Dorsolateral prefrontal cortex (tissue), 120 donors: ENCODE measurements at regions of chr2 and their contacts with region 1.

Region 1: DNA sequence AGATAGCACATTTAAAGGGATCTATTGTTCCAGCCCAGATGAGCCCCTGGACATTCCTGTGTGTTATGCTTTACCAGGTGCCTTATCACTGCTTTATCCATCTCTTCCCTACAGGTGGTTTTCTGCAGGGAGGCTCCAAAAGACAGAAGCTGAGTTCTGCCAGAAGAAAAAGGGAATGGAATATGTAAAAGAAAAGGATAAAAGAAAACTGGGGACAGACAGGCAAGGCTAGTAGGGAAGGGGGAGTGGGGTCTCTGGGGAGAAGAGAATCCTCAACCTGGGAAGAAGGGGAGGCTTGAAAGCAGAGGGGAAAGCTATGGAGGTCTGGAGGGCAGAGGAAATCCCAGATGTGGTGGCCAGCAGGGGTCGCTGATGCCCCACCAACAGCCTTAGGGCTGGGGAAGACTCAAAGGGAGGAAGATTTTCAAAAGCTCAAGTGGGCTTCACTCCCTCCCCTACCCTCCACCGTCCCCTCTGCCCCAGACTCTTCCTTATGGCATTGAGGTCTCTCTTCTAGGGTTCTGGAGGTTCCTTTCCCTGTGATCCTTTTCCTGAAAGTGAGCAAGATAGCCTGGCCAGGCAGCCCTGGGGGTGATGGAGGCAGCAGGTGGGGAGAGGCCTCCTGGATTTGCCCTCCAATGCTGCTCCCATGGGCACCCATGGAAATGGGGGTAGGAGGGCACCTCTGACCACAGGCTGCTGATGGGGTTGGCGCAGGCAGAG is 178.1 kb upstream of the PKDCC start:
- DNase-seq: peak; percentile 44 to 86 (median 78)
- H3K4me3 ChIP-seq: no peak overlapping the region
- H3K27ac ChIP-seq: no peak overlapping the region
- H3K27me3 ChIP-seq: no peaks in the 10 kb centered on the region
- CTCF ChIP-seq: peak; percentile 78 to 99 (median 92)

Region 2: DNA sequence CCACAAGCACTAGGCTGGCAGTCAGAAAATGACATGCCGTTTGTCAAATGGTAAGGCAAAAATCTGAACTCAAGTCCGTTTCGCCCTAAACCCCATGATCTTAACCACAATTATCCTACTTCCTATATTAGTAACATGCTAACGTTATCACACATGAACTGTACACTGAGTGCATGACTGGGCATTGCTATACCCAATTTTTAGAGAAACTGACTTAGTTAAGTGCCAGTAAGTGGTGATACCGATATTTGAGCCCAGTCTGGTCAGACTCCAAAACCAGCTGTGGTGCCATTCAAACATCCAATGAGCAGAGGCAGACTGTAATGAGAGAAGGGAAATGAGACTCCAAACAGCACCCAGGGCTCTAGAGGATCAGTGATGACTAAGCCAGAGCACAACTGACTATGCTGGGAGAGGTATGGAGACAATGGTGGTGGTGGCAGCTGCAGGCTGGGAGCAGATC is 133.6 kb before region 1 on chr2:
- intact Hi-C with region 1: no loop called
- DNase-seq: no peak
- H3K4me3 ChIP-seq: no peak overlapping the region
- H3K27ac ChIP-seq: no peak overlapping the region
- H3K27me3 ChIP-seq: no peaks in the 10 kb centered on the region
- CTCF ChIP-seq: no peak

Region 3: GRCh38 chr2:41853427-41854216 is 16.1 kb before region 1 on chr2:
- intact Hi-C with region 1: loop called in 1 of 2 experiments (anchors 2 kb)
- DNase-seq: peak in 3 of 10 donors; percentile 22 to 46 (median 33)
- H3K4me3 ChIP-seq: no peak overlapping the region
- H3K27ac ChIP-seq: no peak overlapping the region
- H3K27me3 ChIP-seq: peaks cover 0 to 4% (median 0%) of the 10 kb centered on the region in 45 donors
- CTCF ChIP-seq: peak; percentile 61 to 89 (median 80)

Region 4: DNA sequence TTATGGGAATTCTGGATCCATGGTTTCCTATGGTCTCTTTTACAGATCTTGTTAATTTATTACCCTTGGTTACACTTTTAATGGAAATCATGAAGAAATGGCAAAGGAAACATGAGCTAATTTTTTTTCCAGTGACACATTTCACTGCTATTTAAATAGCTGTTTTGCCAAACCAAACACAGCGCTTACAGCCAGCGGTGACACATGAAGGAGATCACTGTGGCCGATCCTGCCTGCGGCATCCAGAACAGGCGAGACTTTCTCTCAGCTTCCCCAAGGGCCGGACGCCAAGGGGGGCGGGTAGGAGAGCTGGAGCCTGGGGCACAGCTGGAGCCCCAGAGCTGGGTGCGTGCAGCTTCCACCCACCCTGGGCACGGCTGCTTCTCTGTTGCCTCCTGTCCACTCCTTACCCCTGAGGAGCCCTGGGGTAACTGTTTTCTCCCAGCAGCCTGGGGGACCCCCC is 96.8 kb after region 1 on chr2:
- intact Hi-C with region 1: loop called in 1 of 2 experiments (anchors 5 kb)
- DNase-seq: peak; percentile 15 to 92 (median 84)
- H3K4me3 ChIP-seq: peak overlapping the region in 12 of 59 donors; percentile 1 to 28 (median 15)
- H3K27ac ChIP-seq: peak overlapping the region; percentile 41 to 97 (median 92)
- H3K27me3 ChIP-seq: no peaks in the 10 kb centered on the region
- CTCF ChIP-seq: peak in 3 of 56 donors; percentile 11 to 31 (median 22)

Region 5: DNA sequence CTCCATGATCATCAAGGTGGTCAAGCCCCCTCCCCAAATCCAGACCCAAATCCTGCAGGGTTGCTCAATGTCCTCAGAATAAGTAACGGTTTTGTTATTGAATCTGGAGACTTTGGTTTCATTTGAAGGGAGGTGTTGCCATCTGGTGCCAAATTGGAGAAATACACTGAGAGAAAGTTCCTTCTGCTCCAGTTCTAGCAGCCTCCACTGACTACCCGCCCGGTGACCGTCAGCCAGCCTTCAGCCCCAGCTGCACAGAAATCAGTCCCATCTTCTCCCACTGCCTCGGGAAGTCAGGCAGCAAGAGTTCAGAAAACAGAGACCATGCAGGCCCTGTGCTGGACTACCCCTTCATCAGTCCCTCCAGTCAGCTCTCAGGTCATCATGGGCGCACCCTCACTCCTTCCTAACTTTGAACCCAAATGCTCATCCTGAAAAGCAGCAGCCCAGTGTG is 216.8 kb after region 1 on chr2:
- intact Hi-C with region 1: loop called (anchors 1 kb)
- DNase-seq: peak in 7 of 10 donors; percentile 22 to 65 (median 61)
- H3K4me3 ChIP-seq: no peak overlapping the region
- H3K27ac ChIP-seq: peak overlapping the region in 43 of 59 donors; percentile 2 to 83 (median 61)
- H3K27me3 ChIP-seq: no peaks in the 10 kb centered on the region
- CTCF ChIP-seq: peak; percentile 48 to 97 (median 85)

Region 6: GRCh38 chr2:42169100-42169873 is 299.6 kb after region 1 on chr2 and contains the start of gene EML4:
- intact Hi-C with region 1: loop called in 1 of 2 experiments (anchors 10 kb)
- DNase-seq: peak; percentile 84 to 96 (median 92)
- H3K4me3 ChIP-seq: peak within 1 kb of the TSS; percentile 59 to 97 (median 88)
- H3K27ac ChIP-seq: peak within 1 kb of the TSS in 58 of 59 donors; percentile 28 to 92 (median 76)
- H3K27me3 ChIP-seq: no peaks in the 10 kb centered on the region
- CTCF ChIP-seq: peak in 2 of 56 donors; percentile 11 to 14
- total RNA-seq, gene EML4: 14.0 to 28.7 (median 20.0) TPM

Region 7: DNA sequence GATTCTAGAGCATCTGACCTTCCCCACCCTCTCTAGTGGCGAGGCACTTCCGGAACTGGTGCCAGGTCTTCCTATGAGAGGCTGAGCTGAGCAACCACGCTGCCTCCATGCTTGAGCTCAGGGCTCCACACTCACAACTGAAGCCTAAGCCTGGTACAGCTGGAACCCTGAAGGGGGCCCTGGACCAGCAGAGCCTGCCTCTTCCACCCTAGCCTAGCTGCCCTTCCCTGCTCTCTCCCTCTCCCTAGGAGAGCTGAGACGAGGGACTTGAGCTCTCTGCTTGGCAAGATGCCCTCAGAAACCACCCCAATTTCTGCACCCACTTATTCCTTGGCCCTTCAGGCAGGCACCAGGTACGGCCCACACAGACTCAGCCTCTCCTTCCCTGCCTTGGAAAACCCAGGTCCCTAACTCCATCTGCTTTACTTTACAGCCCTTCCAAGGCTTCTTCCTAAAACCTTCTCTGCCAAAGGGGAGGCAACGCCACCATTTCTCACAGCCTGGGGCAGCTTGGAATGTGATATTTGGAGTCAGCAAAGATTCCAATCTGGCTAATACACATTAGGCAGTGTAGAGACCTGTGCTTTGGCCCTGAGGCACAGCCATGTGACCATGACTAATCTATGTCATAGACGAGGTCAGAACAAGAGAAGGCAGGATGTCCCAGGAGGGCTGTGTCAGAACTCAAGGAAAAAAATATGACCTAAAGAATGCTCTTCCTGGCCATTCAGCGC is 472.5 kb after region 1 on chr2:
- intact Hi-C with region 1: loop called in 1 of 2 experiments (anchors 10 kb)
- DNase-seq: no peak
- H3K4me3 ChIP-seq: no peak overlapping the region
- H3K27ac ChIP-seq: peak overlapping the region in 26 of 59 donors; percentile 1 to 76 (median 36)
- H3K27me3 ChIP-seq: no peaks in the 10 kb centered on the region
- CTCF ChIP-seq: no peak